IMR-90 (cell line): ENCODE measurements at regions of chr5 and their contacts with region 1.

Region 1: GRCh38 chr5:179265514-179266290 is 79.6 kb downstream of the ADAMTS2 start:
- DNase-seq: peak; percentile 99
- ATAC-seq: peak; percentile 90
- H3K4me3 ChIP-seq: no peak overlapping the region
- H3K27ac ChIP-seq: peak overlapping the region; percentile 98
- H3K4me1 ChIP-seq: peaks cover 56% of the 10 kb centered on the region
- H3K27me3 ChIP-seq: no peaks in the 10 kb centered on the region
- CTCF ChIP-seq: no peak; the same call in 1 of the 2 replicates
- POLR2A ChIP-seq: peak; percentile 83
- RAD21 ChIP-seq: peak; percentile 25

Region 2: GRCh38 chr5:177982072-177982727 is 1283.5 kb before region 1 on chr5:
- CTCF ChIA-PET with region 1: no interaction called
- POLR2A ChIA-PET with region 1: no interaction called
- dilution Hi-C with region 1: no loop called
- in situ Hi-C with region 1: no loop called
- intact Hi-C with region 1: no loop called
- DNase-seq: no peak
- ATAC-seq: no peak
- H3K4me3 ChIP-seq: no peak overlapping the region
- H3K27ac ChIP-seq: no peak overlapping the region
- H3K4me1 ChIP-seq: no peaks in the 10 kb centered on the region
- H3K27me3 ChIP-seq: peaks cover 33% of the 10 kb centered on the region
- CTCF ChIP-seq: no peak
- POLR2A ChIP-seq: no peak
- RAD21 ChIP-seq: no peak

Region 3: DNA sequence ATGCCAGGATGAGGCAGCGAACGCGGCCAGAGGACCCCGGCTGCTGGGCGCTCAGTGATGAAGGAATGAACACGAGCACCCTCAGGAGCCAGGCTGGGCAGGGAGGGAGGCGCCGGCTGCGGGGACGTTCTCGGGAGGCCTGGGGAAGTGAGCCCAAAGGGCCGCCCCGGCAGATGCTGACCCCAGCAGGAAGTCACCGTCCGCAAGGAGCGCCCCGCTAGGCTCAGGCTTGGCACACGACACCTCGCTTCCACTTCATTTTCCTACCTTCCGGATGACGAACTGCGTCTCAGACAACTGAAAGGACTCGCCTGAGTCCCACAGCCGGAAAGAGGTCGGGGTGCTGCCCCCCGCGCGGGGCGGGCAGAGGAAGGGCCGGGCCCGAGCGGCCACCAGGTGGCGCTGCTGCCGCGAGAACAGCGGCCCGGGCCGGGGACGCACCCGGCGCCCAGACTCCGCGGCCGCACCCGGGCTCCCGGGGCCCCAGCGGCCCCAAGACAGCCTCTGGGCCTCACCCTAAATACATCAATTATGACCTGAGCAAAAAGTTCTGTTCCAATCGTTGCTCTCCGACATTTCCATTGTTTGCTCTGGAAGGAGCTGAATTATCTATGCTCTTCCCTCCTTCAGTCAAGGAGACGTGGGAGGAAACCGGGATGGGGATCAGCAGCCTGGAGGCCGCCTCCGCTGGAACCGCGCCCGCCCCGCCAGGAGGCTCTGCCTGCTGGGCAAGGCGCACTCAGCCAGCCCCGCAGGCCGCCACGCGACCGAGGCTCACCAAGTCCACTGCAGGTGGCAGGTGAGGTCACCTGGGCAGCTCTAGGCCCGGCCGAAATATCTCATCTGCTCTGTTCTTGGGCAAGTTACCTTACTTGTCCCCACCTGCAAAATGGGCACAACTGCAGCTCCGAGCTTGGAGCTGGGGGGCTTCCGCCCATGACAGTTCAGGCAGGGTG is 98.5 kb before region 1 on chr5:
- CTCF ChIA-PET with region 1: no interaction called
- POLR2A ChIA-PET with region 1: no interaction called
- dilution Hi-C with region 1: no loop called
- in situ Hi-C with region 1: no loop called
- intact Hi-C with region 1: loop called (anchors 5 kb)
- DNase-seq: peak; percentile 27
- ATAC-seq: peak; percentile 93
- H3K4me3 ChIP-seq: no peak overlapping the region
- H3K27ac ChIP-seq: no peak overlapping the region
- H3K4me1 ChIP-seq: no peaks in the 10 kb centered on the region
- H3K27me3 ChIP-seq: no peaks in the 10 kb centered on the region
- CTCF ChIP-seq: peak; percentile 91
- POLR2A ChIP-seq: 0 out of 2 replicates have a peak, but pooled peaks have one; percentile 16
- RAD21 ChIP-seq: peak; percentile 90

Region 4: DNA sequence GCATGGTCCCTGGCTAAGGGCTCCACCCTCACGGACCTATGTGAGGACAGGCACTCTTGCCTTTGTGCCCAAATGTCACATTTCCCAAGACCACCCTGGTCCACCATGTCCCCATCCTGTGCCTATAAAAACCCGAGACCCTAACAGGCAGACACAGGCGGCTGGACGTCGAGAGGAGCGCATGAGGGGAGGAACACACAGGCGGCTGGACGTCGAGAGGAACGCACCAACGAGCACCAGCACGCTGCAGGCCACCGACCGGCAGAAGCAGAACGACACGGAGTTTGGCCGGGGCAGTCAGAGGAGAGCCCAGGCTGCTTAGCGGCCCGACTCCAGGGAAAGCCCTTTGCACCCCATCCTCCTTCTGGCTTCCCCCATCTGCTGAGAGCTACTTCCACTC is 40.3 kb before region 1 on chr5:
- CTCF ChIA-PET with region 1: no interaction called
- POLR2A ChIA-PET with region 1: no interaction called
- dilution Hi-C with region 1: no loop called
- in situ Hi-C with region 1: no loop called
- intact Hi-C with region 1: no loop called
- DNase-seq: no peak
- ATAC-seq: no peak
- H3K4me3 ChIP-seq: no peak overlapping the region
- H3K27ac ChIP-seq: no peak overlapping the region
- H3K4me1 ChIP-seq: peaks cover 9% of the 10 kb centered on the region; the same call in 1 of the 2 replicates
- H3K27me3 ChIP-seq: no peaks in the 10 kb centered on the region
- CTCF ChIP-seq: no peak
- POLR2A ChIP-seq: no peak
- RAD21 ChIP-seq: no peak

Region 5: GRCh38 chr5:179304466-179304865 is 38.8 kb after region 1 on chr5:
- CTCF ChIA-PET with region 1: no interaction called
- POLR2A ChIA-PET with region 1: no interaction called
- dilution Hi-C with region 1: no loop called
- in situ Hi-C with region 1: no loop called
- intact Hi-C with region 1: loop called (anchors 5 kb)
- DNase-seq: peak; percentile 97
- ATAC-seq: peak; percentile 88
- H3K4me3 ChIP-seq: no peak overlapping the region
- H3K27ac ChIP-seq: no peak overlapping the region; the same call in 1 of the 2 replicates
- H3K4me1 ChIP-seq: peaks cover 29% of the 10 kb centered on the region
- H3K27me3 ChIP-seq: no peaks in the 10 kb centered on the region
- CTCF ChIP-seq: no peak
- POLR2A ChIP-seq: no peak
- RAD21 ChIP-seq: no peak; the same call in 1 of the 2 replicates

Region 6: DNA sequence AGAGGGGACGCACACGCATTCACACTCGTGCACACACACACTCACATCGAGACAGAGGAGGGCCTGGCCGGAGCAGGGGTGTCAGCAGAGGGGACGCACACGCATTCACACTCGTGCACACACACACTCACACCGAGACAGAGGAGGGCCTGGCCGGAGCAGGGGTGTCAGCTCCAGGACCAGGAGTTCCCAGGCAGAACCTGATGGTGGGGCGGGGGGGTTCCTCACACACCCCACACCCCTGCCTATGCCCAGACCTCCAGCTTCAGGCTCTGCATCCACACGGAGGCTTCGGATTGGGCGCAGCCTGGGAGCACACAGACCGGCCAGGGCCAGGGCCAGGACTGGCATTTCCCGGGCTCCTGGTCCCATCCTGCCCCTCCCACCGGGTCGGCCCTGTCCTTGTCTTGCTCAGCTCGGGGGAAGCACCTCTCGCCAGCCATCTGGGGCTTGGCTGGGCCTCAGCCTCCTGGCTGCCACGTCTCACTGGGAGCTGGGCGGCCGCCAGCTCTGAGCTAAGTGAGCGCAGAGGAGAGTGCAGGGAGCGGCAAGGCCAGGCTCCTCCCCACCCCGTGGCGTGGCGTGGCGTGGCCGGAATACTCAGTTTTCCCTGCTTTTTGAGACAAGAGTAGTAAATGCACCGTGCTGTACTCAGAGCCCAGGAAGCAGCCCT is 48.3 kb after region 1 on chr5:
- CTCF ChIA-PET with region 1: no interaction called
- POLR2A ChIA-PET with region 1: no interaction called
- dilution Hi-C with region 1: no loop called
- in situ Hi-C with region 1: no loop called
- intact Hi-C with region 1: loop called (anchors 1 kb)
- DNase-seq: peak; percentile 96
- ATAC-seq: peak; percentile 97
- H3K4me3 ChIP-seq: no peak overlapping the region
- H3K27ac ChIP-seq: peak overlapping the region; percentile 82
- H3K4me1 ChIP-seq: peaks cover 14% of the 10 kb centered on the region
- H3K27me3 ChIP-seq: no peaks in the 10 kb centered on the region
- CTCF ChIP-seq: no peak
- POLR2A ChIP-seq: no peak
- RAD21 ChIP-seq: peak; percentile 27; the same call in 1 of the 2 replicates

Region 7: DNA sequence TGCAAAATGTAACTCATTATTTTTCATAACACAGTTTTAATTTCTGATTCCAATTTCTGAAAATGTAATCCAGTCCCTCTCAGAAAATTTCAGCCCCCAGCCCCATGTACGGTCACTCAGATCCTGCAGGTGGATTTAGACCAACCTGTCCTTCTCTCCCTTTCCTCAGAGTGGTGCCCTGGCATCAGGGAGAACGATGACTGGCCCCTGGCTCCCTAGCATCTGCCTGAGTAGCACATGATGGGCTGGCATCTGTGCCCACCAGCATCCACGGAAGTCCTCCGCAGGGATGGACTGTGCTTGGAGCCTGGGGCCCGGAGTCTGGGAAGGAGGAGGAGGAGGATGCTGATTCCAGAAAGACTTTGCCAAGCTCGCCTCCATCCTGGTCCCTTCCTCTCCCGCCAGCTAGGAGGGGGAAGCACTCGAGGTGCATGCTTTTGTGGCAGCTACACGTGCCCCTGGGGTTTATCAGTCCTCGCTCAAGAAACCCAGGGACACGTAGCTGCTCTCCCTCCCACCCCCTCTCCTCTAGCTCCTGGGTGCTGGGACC is 230.3 kb after region 1 on chr5:
- CTCF ChIA-PET with region 1: no interaction called
- POLR2A ChIA-PET with region 1: no interaction called
- dilution Hi-C with region 1: no loop called
- in situ Hi-C with region 1: no loop called
- intact Hi-C with region 1: loop called (anchors 5 kb)
- DNase-seq: no peak
- ATAC-seq: no peak
- H3K4me3 ChIP-seq: no peak overlapping the region
- H3K27ac ChIP-seq: no peak overlapping the region
- H3K4me1 ChIP-seq: peaks cover 2% of the 10 kb centered on the region; the same call in 1 of the 2 replicates
- H3K27me3 ChIP-seq: peaks cover 8% of the 10 kb centered on the region
- CTCF ChIP-seq: 0 out of 2 replicates have a peak, but pooled peaks have one; percentile 8
- POLR2A ChIP-seq: no peak
- RAD21 ChIP-seq: peak; percentile 11; the same call in 1 of the 2 replicates

Region 8: GRCh38 chr5:179568721-179569120 is 303.0 kb after region 1 on chr5:
- CTCF ChIA-PET with region 1: no interaction called
- POLR2A ChIA-PET with region 1: no interaction called
- dilution Hi-C with region 1: no loop called
- in situ Hi-C with region 1: no loop called
- intact Hi-C with region 1: no loop called
- DNase-seq: peak; percentile 50
- ATAC-seq: peak; percentile 35; the same call in 1 of the 2 replicates
- H3K4me3 ChIP-seq: no peak overlapping the region
- H3K27ac ChIP-seq: no peak overlapping the region
- H3K4me1 ChIP-seq: peaks cover 2% of the 10 kb centered on the region; the same call in 1 of the 2 replicates
- H3K27me3 ChIP-seq: no peaks in the 10 kb centered on the region
- CTCF ChIP-seq: no peak
- POLR2A ChIP-seq: no peak
- RAD21 ChIP-seq: no peak